ENCODE measurements at regions of chr5 and their contacts with region 1.

Region 1: GRCh38 chr5:119743927-119744326 is 114.6 kb downstream of the FAM170A start:
- DNase-seq: peak in 2 of 6 donors; percentile 4 to 28
- ATAC-seq: peak; percentile 64 to 90 (median 86)
- H3K4me3 ChIP-seq: no peak overlapping the region
- H3K27ac ChIP-seq: no peak overlapping the region
- H3K4me1 ChIP-seq: no peaks in the 10 kb centered on the region
- H3K27me3 ChIP-seq: no peaks in the 10 kb centered on the region
- CTCF ChIP-seq: peak in 3 of 4 donors; percentile 18 to 40 (median 39)

Region 2: DNA sequence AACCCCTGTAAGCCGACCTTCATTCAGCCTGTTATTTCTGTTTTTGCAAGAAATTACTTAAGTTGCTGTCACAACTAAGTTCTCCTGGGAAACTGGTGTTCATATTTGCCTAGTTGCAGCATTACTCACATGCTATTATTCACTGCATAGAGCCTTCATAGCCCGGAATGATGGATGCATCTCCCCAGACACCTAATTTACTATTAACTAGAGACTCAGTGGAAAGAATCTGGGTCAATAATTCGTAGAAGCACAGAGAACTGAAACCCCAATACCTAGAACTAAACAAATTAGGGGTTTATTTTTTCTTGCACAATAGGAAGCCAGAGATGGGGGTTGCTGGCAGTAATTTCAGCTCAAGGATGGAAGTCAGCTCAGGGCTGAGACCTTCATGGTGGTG is 160.2 kb before region 1 on chr5:
- intact Hi-C with region 1: loop called in 2 of 3 experiments (anchors 10 kb)
- DNase-seq: no peak
- ATAC-seq: no peak
- H3K4me3 ChIP-seq: no peak overlapping the region
- H3K27ac ChIP-seq: no peak overlapping the region
- H3K4me1 ChIP-seq: no peaks in the 10 kb centered on the region
- H3K27me3 ChIP-seq: no peaks in the 10 kb centered on the region
- CTCF ChIP-seq: no peak

Measured in pancreas (tissue), 10 donors.